ENCODE measurements at regions of chr12 and their contacts with region 1.

Region 1: GRCh38 chr12:122116707-122117535 is 38.4 kb downstream of the MLXIP start:
- DNase-seq: peak in 1 of 5 donors; percentile 16
- ATAC-seq: peak in 3 of 4 donors; percentile 34 to 62 (median 43)
- H3K4me3 ChIP-seq: no peak overlapping the region
- H3K27ac ChIP-seq: peak overlapping the region in 1 of 12 donors; percentile 52
- H3K4me1 ChIP-seq: peaks cover 0 to 24% (median 13%) of the 10 kb centered on the region in 12 donors
- H3K27me3 ChIP-seq: no peaks in the 10 kb centered on the region
- CTCF ChIP-seq: peak in 3 of 12 donors; percentile 9 to 25 (median 24)
- POLR2A ChIP-seq: no peak

Region 2: GRCh38 chr12:122078141-122079032 is 38.5 kb before region 1 on chr12 and contains the start of gene MLXIP:
- intact Hi-C with region 1: loop called in 2 of 10 experiments (anchors 5 kb)
- DNase-seq: peak; percentile 95 to 97 (median 95)
- ATAC-seq: peak; percentile 79 to 94 (median 88)
- H3K4me3 ChIP-seq: peak within 1 kb of the TSS; percentile 32 to 94 (median 74)
- H3K27ac ChIP-seq: peak within 1 kb of the TSS; percentile 53 to 95 (median 86)
- H3K4me1 ChIP-seq: peaks cover 7 to 55% (median 38%) of the 10 kb centered on the region in 12 donors
- H3K27me3 ChIP-seq: no peaks in the 10 kb centered on the region
- CTCF ChIP-seq: no peak
- POLR2A ChIP-seq: peak; percentile 87 to 92
- total RNA-seq, gene MLXIP: 14.3 to 39.6 (median 22.7) TPM

Region 3: DNA sequence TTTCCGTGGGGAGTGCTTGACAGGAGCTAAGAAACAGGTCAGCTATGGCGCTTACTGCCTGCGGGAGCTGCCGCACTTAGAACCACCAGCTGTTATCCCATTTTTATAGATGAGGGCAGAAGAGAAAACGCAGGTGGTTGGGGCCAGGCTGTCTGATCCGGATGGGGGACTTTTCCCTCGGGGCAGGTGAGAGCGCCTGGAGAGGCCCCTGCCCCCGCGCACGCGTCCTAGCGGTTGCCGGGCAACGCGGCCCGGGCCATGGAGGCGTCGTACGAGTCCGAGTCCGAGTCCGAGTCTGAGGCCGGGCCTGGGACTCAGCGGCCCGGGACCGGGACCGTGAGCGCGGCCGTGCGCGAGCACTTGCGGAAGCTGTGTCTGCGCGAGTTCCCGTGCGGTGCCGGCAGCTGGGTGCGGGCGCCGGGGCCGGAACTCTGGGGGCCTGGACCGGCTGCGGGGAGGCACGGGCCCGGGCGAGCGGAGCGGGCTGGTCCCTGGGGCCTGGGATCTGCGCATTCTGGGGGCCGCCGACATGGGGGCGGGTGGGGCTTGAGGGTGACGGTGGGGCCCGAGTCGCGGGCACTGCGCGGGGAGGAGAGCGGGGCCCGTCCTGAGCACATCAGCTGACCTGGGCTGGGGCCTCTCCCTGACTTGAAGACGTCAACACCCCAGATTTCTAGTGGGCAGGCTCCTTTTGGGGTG is 66.1 kb after region 1 on chr12 and contains the start of gene LRRC43:
- intact Hi-C with region 1: no loop called
- DNase-seq: peak in 2 of 5 donors; percentile 39 to 45
- ATAC-seq: peak in 3 of 4 donors; percentile 58 to 78 (median 68)
- H3K4me3 ChIP-seq: peak within 1 kb of the TSS; percentile 32 to 64 (median 50)
- H3K27ac ChIP-seq: no peak within 1 kb of the TSS
- H3K4me1 ChIP-seq: peaks cover 0 to 13% (median 3%) of the 10 kb centered on the region in 12 donors
- H3K27me3 ChIP-seq: peaks cover 0 to 12% (median 2%) of the 10 kb centered on the region in 9 donors
- CTCF ChIP-seq: no peak
- POLR2A ChIP-seq: no peak
- total RNA-seq, gene LRRC43: 0.31 to 1.9 (median 0.92) TPM in 8 of 9 donors, not detected in the other

Measured in heart left ventricle (tissue), 16 donors.